ENCODE measurements at regions of chr9 and their contacts with region 1.

Region 1: GRCh38 chr9:113454914-113455761 is 8.4 kb upstream of the RGS3 start:
- DNase-seq: peak; percentile 66
- ATAC-seq: peak; percentile 97

Region 2: GRCh38 chr9:113221003-113221799 is 233.9 kb before region 1 on chr9 and contains the starts of genes FKBP15 and SLC31A1:
- intact Hi-C with region 1: no loop called
- DNase-seq: peak; percentile 98
- ATAC-seq: peak; percentile 99
- total RNA-seq, gene FKBP15: 18.1 TPM
- total RNA-seq, gene SLC31A1: 9.4 TPM

Region 3: GRCh38 chr9:113492343-113493212 is 37.4 kb after region 1 on chr9:
- intact Hi-C with region 1: loop called (anchors 5 kb)
- DNase-seq: no peak
- ATAC-seq: peak; percentile 64

Measured in Right ventricle myocardium superior (tissue), 1 donor.